Endothelial cell of umbilical vein (primary cell): ENCODE measurements at regions of chr3 and their contacts with region 1.

Region 1: DNA sequence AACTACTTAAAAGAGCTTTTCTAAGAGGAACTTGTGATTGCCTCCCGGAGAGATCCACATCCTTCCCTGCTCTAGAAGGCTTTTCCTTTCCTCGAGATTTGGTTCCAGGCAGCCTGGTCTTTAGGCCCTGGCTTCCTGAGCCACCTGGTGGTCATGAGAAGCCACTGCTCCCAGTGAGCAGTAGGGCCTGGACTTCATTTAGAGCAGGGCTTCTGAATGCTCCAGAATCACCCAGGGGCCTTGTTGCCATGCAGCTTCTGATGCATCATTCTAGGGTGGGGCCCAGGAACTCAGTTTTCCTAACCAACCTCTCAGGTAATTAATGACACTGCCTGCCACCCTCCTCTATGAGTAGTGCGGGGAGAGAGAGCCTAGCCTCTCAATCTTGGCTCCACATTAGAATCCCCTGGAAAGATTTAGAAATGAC is 29.6 kb downstream of the PSMD6 start:
- DNase-seq: peak; percentile 71
- H3K4me3 ChIP-seq: no peak overlapping the region
- H3K27ac ChIP-seq: no peak overlapping the region
- H3K4me1 ChIP-seq: peaks cover 5% of the 10 kb centered on the region
- H3K27me3 ChIP-seq: no peaks in the 10 kb centered on the region
- CTCF ChIP-seq: peak; percentile 90 to 92
- POLR2A ChIP-seq: no peak

Region 2: GRCh38 chr3:63349583-63350521 is 643.8 kb before region 1 on chr3:
- CTCF ChIA-PET with region 1: interaction called, 45 read pairs
- POLR2A ChIA-PET with region 1: no interaction called
- dilution Hi-C with region 1: no loop called
- intact Hi-C with region 1: loop called (anchors 1 kb)
- DNase-seq: peak; percentile 47
- H3K4me3 ChIP-seq: no peak overlapping the region
- H3K27ac ChIP-seq: no peak overlapping the region
- H3K4me1 ChIP-seq: no peaks in the 10 kb centered on the region
- H3K27me3 ChIP-seq: peaks cover 0 to 3% of the 10 kb centered on the region in 2 experiments
- CTCF ChIP-seq: peak; percentile 63 to 77
- POLR2A ChIP-seq: no peak

Region 3: DNA sequence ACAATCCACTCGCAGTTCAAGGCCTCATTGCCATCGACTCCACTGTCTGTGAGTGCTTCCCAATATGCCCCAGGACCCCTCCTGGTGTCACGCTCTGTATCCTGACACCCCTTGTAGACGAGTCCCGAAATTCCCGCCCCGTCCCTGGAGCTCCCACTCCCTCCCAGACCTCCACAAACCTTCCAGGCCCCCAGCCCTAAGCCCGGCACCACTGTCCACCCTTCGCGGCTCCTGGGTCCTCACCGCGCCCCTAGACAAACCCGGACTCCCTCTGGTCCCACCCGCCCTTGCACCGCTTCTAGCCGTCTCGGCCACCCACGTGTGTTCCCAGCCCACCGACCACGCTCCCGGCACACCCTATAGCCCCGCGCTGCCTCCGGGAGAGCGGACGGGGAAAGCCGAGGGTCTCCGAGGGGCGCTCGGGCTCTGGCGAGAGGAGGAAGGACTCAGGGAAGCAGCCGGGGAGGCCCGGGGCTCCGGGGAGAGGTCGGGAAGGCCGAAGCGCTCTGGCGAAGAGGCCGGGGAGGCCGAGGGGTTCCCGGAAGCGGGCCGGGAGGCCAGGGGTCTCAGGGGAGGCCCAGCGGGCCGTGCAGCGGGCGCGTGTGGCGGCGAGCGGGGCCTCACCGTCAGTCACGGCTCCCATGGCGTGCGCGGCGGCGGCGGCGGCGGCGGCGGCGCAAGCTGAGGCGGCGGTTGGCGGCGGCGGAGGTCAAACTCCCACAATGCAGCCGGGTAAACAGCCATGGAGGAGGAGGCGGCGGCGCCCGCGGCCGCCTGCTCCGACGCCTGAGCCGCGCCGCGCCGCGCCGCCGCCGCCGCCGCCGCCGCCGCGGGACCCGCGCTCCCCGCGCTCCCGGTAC is 130.3 kb before region 1 on chr3 and contains the starts of genes ATXN7 and THOC7:
- CTCF ChIA-PET with region 1: interaction called, 3 read pairs
- POLR2A ChIA-PET with region 1: no interaction called
- dilution Hi-C with region 1: no loop called
- intact Hi-C with region 1: loop called (anchors 2 kb)
- DNase-seq: peak; percentile 50
- H3K4me3 ChIP-seq: peak within 1 kb of the TSS; percentile 42 to 99 (median 68)
- H3K27ac ChIP-seq: peak within 1 kb of the TSS; percentile 75
- H3K4me1 ChIP-seq: peaks cover 12% of the 10 kb centered on the region
- H3K27me3 ChIP-seq: no peaks in the 10 kb centered on the region
- CTCF ChIP-seq: no peak
- POLR2A ChIP-seq: no peak
- total RNA-seq, gene ATXN7: 27.1 and 34.7 TPM in 2 replicates
- total RNA-seq, gene THOC7: 68.7 and 69.4 TPM in 2 replicates

Region 4: DNA sequence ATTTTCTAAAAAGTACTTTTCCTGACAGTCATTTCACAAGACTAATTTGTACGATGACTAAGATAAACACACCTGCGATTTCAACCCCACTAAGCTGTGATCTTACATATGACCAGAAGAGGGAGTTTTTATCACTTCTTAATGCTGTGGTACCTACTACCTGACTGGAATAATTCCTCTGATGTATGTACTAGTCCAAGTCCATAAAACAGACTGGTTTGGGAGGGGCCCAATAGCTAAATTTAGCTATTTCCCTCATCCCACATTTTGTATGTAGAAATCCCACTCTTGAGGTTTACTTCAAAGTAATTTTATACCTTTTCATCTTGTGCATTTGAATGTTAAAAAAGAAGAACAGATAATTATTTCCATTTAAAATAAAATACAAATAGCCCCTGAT is 31.8 kb before region 1 on chr3:
- CTCF ChIA-PET with region 1: interaction called, 34 read pairs
- POLR2A ChIA-PET with region 1: interaction called, 4 read pairs
- dilution Hi-C with region 1: no loop called
- intact Hi-C with region 1: loop called (anchors 1 kb)
- DNase-seq: peak; percentile 65
- H3K4me3 ChIP-seq: no peak overlapping the region
- H3K27ac ChIP-seq: no peak overlapping the region
- H3K4me1 ChIP-seq: peaks cover 22% of the 10 kb centered on the region
- H3K27me3 ChIP-seq: no peaks in the 10 kb centered on the region
- CTCF ChIP-seq: peak; percentile 17 to 49
- POLR2A ChIP-seq: no peak

Region 5: GRCh38 chr3:64484289-64484992 is 490.8 kb after region 1 on chr3:
- CTCF ChIA-PET with region 1: no interaction called
- POLR2A ChIA-PET with region 1: no interaction called
- dilution Hi-C with region 1: no loop called
- intact Hi-C with region 1: loop called (anchors 1 kb)
- DNase-seq: peak; percentile 81
- H3K4me3 ChIP-seq: no peak overlapping the region
- H3K27ac ChIP-seq: no peak overlapping the region
- H3K4me1 ChIP-seq: peaks cover 4% of the 10 kb centered on the region
- H3K27me3 ChIP-seq: peaks cover 8 to 13% of the 10 kb centered on the region in 2 experiments
- CTCF ChIP-seq: peak; percentile 78 to 81
- POLR2A ChIP-seq: no peak